OCI-LY7 (cell line): ENCODE measurements at regions of chr2 and their contacts with region 1.

Region 1: DNA sequence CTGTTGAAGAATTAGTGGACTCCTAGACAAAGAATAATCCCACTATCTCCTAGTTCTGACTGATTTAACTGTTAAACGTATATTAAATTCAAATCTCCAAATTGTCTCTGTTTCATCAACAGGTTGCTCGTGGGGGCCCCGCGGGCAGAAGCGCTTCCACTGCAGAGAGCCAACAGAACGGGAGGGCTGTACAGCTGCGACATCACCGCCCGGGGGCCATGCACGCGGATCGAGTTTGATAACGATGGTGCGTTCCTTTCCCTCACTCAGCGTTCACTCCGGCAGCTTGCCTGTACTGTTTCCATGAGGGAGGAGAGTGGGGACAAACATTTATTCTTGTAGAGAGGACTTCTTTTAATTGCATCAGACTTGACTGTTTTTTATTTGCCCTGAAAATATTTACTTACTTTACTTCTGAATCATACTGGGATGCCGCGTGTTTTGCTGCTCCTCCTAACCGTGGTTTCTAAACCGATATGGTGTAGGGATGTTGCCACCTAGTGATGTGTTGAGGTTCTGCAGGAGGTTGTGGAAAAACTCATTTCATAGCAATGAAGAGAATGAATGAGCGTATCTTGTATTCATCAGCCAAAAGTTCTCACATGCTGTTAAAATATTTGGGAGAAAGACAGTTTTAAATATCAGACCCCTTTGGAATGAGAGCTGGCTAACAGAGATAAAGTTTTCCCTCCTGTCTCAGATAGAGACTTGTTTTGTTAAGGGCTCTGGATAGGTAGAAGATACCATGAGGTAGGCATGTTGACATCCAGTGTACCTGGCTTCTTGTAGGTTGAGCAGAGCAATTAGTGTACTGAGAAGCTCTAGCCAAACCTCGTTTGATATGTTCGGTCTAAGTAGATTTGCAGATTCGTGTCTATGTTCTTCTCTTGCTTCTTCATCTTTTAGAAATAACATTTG is 38.3 kb downstream of the ITGA6 start:
- DNase-seq: peak; percentile 68
- H3K4me3 ChIP-seq: no peak overlapping the region
- H3K27ac ChIP-seq: no peak overlapping the region
- H3K4me1 ChIP-seq: peaks cover 19% of the 10 kb centered on the region
- CTCF ChIP-seq: peak; percentile 92

Region 2: GRCh38 chr2:171574149-171574795 is 891.4 kb before region 1 on chr2:
- CTCF ChIA-PET with region 1: no interaction called
- POLR2A ChIA-PET with region 1: no interaction called
- intact Hi-C with region 1: loop called (anchors 10 kb)
- DNase-seq: peak; percentile 70
- H3K4me3 ChIP-seq: no peak overlapping the region
- H3K27ac ChIP-seq: no peak overlapping the region
- H3K4me1 ChIP-seq: no peaks in the 10 kb centered on the region
- CTCF ChIP-seq: peak; percentile 97

Region 3: DNA sequence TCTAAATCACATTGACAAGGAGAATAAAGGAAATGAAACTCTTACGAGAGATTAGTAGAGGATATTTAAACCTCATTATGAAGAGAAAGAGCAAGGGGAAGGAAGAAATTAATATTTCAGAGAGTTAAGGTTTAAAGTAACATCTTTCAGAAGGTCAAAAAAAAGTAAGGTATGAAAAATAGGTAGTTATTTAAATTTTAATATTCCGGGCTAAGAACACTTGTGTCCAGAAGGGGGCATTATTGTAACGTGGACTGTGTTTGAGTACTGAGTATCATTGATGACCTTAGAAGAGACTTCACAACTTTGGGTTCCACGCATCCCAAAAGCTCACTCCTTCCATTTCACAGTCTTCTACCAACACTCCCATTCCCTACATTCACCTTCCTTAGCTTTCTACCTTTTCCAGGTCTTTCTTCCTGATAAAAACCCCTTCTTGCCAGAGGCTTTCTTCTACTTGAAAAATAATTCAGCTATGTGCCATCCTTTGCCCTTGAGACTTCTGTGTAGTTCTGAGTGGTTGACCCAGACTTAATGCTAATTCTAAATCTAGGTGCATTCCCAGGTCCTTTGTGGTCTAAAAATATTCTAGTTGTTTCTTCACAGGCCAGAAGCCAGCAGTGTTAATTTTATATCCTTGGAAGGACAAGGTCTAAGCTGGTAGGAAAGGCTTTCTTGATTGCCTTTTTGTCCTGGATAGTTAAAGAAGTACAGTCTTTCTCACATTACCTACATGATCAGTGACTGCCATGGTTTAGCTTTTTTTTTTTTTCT is 761.9 kb before region 1 on chr2:
- CTCF ChIA-PET with region 1: no interaction called
- POLR2A ChIA-PET with region 1: no interaction called
- intact Hi-C with region 1: loop called (anchors 5 kb)
- DNase-seq: peak; percentile 56
- H3K4me3 ChIP-seq: no peak overlapping the region
- H3K27ac ChIP-seq: no peak overlapping the region
- H3K4me1 ChIP-seq: peaks cover 9% of the 10 kb centered on the region
- CTCF ChIP-seq: peak; percentile 81

Region 4: GRCh38 chr2:172131713-172132555 is 333.7 kb before region 1 on chr2:
- CTCF ChIA-PET with region 1: interaction called, 4 read pairs
- POLR2A ChIA-PET with region 1: no interaction called
- intact Hi-C with region 1: loop called (anchors 1 kb)
- DNase-seq: no peak
- H3K4me3 ChIP-seq: no peak overlapping the region
- H3K27ac ChIP-seq: no peak overlapping the region
- H3K4me1 ChIP-seq: no peaks in the 10 kb centered on the region
- CTCF ChIP-seq: no peak

Region 5: DNA sequence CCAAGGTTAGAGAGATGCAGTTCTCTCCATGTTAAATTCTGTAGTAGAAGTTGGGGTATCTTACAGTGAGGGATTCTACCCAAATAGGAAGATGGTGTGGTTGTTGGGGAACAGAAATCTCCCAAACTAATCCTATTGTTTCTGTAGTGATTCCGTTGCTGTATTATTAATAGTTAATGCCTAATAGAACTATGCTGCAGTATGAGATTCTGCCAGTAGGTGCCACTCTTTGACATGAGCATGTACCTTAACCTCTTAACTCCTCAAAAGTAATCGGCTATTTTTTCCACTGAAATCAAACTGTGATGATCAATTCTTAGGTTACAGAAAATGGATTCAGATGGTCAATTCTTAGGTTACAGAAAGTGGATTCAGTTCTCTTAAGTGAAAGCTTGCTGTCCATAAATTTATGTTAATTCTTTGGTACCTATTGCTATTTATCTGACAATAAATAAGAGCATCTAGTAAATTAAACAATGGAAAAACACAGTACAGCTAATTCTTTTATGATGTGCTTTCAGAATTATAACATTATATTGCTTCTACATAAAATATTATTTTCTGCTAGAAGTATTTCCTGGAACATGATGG is 265.1 kb before region 1 on chr2:
- CTCF ChIA-PET with region 1: no interaction called
- POLR2A ChIA-PET with region 1: no interaction called
- intact Hi-C with region 1: loop called (anchors 10 kb)
- DNase-seq: no peak
- H3K4me3 ChIP-seq: no peak overlapping the region
- H3K27ac ChIP-seq: no peak overlapping the region
- H3K4me1 ChIP-seq: no peaks in the 10 kb centered on the region
- CTCF ChIP-seq: peak; percentile 67

Region 6: GRCh38 chr2:172427256-172427989 is 38.3 kb before region 1 on chr2 and contains the start of gene ITGA6:
- CTCF ChIA-PET with region 1: no interaction called
- POLR2A ChIA-PET with region 1: no interaction called
- intact Hi-C with region 1: loop called (anchors 5 kb)
- DNase-seq: no peak
- H3K4me3 ChIP-seq: no peak within 1 kb of the TSS
- H3K27ac ChIP-seq: no peak within 1 kb of the TSS
- H3K4me1 ChIP-seq: no peaks in the 10 kb centered on the region
- CTCF ChIP-seq: no peak
- total RNA-seq, gene ITGA6: not detected in 2 replicates

Region 7: GRCh38 chr2:172710584-172711024 is 244.9 kb after region 1 on chr2:
- CTCF ChIA-PET with region 1: no interaction called
- POLR2A ChIA-PET with region 1: no interaction called
- intact Hi-C with region 1: loop called (anchors 5 kb)
- DNase-seq: peak; percentile 34
- H3K4me3 ChIP-seq: no peak overlapping the region
- H3K27ac ChIP-seq: no peak overlapping the region
- H3K4me1 ChIP-seq: no peaks in the 10 kb centered on the region
- CTCF ChIP-seq: peak; percentile 83